Common myeloid progenitor, CD34-positive (primary cell): ENCODE measurements at regions of chr1 and their contacts with region 1.

Region 1: DNA sequence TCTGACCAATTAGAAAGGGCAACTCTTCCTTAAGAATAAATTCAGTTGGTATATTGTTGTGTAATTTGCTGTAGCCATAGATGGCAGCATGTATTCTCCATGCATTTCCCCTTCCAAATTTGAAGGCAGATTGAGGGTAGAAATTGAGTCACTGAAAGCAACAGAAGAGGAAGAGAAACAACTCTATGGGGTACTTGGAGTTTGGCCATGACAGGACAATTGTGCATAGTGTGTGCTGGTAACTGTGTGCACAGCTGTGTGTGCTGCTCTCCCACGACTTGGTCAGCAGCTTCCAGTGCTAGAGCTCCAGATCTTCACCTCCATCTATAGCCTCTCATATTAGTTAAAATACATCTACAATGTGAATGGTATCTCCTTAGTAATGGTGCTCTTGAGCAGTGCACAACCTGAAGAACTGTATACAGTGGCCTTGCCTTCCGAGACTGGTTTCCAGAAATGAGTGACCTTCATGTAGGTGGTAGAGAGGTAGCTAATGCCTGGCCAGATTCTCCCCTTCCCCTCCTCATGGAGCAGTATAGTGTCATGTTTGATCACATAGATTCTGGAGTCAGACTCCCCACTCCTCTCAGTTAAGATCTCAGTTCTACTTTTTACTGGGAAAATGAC is 882 bp upstream of the FCAMR start:
- DNase-seq: peak in 2 of 3 donors; percentile 19 to 22
- H3K4me3 ChIP-seq: no peak overlapping the region
- H3K27ac ChIP-seq: no peak overlapping the region
- H3K4me1 ChIP-seq: peaks cover 26 to 46% (median 30%) of the 10 kb centered on the region in 4 experiments
- H3K27me3 ChIP-seq: no peaks in the 10 kb centered on the region

Region 2: DNA sequence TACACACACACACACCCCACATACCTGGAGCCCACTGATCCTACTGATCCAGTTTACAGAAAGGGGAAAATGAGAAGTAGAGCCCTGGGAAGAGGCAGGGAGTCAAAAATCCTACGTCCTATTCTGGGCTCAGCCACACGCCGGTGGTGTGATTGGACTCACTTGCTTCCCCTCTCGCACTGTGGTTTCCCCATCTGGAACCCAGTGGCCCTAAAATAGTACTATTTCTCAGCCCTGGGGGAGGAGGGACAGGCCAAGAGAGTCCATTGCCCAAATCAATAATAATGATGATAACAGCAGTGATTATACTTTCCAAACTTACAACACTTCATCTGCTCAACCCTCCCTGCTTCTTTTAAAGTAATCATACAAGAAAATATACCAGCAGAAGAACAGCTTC is 21.9 kb before region 1 on chr1:
- CTCF ChIA-PET with region 1: interaction called, 18 read pairs
- POLR2A ChIA-PET with region 1: no interaction called
- DNase-seq: peak in 1 of 3 donors; percentile 37
- H3K4me3 ChIP-seq: peak overlapping the region in 1 of 7 experiments; percentile 27
- H3K27ac ChIP-seq: no peak overlapping the region
- H3K4me1 ChIP-seq: peaks cover 0 to 45% (median 16%) of the 10 kb centered on the region in 4 experiments
- H3K27me3 ChIP-seq: no peaks in the 10 kb centered on the region

Region 3: GRCh38 chr1:207032528-207033017 is 61.4 kb after region 1 on chr1 and contains the start of gene C1orf116:
- CTCF ChIA-PET with region 1: no interaction called
- POLR2A ChIA-PET with region 1: no interaction called
- DNase-seq: no peak
- H3K4me3 ChIP-seq: no peak within 1 kb of the TSS
- H3K27ac ChIP-seq: peak within 1 kb of the TSS in 1 of 2 experiments; percentile 1
- H3K4me1 ChIP-seq: peaks cover 0 to 10% (median 5%) of the 10 kb centered on the region in 4 experiments
- H3K27me3 ChIP-seq: peaks cover 0 to 3% (median 0%) of the 10 kb centered on the region in 5 experiments